Activated CD4-positive, alpha-beta memory T cell treated with anti-CD3 and anti-CD28 coated beads for 36 hours (primary cell): ENCODE measurements at regions of chrX and their contacts with region 1.

Region 1: GRCh38 chrX:148380650-148381561 is 119.5 kb upstream of the AFF2 start:
- DNase-seq: peak; percentile 60
- H3K4me3 Mint-ChIP-seq: peak overlapping the region; percentile 64
- H3K27ac Mint-ChIP-seq: peak overlapping the region; percentile 87
- H3K4me1 Mint-ChIP-seq: peaks cover 34% of the 10 kb centered on the region
- H3K27me3 Mint-ChIP-seq: no peaks in the 10 kb centered on the region

Region 2: DNA sequence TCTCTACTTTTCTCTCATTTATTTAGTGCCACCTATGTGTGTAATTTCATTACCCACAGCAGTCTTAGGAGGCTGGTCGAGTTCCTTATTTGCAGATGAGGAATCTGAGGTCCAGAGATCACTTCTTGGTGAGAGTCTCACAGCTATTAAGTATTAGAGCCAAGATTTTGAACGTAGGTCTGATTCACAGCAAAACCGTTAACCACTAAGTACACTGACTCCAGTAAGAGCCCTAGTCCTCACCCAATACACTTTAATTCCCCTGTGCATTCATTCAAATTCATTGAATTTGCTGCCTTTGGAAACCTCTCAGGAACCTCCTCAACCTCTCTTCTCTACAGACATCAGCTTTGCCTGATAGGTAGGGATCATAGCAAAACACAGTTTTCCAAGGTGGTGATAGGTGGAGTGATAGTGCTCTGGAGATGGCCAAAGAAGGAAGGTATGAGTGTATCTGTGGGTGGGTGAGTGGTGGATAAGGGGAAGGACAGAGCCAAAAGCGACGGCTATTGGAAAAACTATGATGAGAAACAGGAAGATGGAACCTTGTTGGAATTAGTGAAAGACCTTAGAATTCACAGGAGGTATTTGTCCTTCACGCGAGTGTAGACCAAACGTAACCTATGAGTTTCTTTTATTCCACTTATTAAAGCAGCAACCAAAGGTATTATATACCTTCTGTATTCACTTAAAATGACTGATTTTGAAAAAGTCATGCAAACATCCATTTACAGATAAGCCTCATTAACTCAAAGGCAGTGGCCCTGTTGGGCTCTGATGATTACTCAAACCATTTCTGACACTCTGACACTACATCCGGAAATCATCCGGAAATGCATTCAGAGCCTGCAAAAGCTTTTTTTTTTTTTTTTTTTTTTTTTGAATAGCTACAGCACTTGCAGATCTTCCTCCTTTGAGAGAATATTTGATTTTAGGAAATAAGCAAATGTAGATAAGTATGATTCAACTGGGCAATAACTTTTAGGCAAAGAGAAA is 462.9 kb before region 1 on chrX:
- CTCF ChIA-PET with region 1: no interaction called
- POLR2A ChIA-PET with region 1: no interaction called
- intact Hi-C with region 1: loop called (anchors 5 kb)
- DNase-seq: peak; percentile 28
- H3K4me3 Mint-ChIP-seq: peak overlapping the region; percentile 53
- H3K27ac Mint-ChIP-seq: peak overlapping the region; percentile 93
- H3K4me1 Mint-ChIP-seq: peaks cover 58% of the 10 kb centered on the region
- H3K27me3 Mint-ChIP-seq: no peaks in the 10 kb centered on the region

Region 3: DNA sequence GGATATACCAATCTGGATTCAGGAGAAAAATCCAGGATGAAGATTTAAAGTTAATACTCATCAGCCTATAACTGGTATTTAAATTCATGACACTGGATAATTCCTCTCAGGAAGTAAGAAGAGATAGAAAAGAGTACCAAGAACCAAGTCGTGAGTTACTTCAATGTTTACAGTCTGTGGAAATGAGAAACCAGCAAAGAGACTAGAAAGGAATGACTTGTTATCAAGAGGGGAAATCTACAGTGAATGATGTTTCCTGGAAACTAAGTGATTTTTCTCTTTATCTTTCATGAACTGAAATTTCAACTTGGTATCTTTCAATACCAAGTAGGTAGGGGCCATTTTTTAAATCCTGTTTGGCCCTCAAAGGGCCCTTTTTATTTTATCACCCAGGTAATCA is 98.4 kb before region 1 on chrX:
- CTCF ChIA-PET with region 1: no interaction called
- POLR2A ChIA-PET with region 1: no interaction called
- intact Hi-C with region 1: loop called (anchors 1 kb)
- DNase-seq: no peak
- H3K4me3 Mint-ChIP-seq: no peak overlapping the region
- H3K27ac Mint-ChIP-seq: no peak overlapping the region
- H3K4me1 Mint-ChIP-seq: peaks cover 24% of the 10 kb centered on the region
- H3K27me3 Mint-ChIP-seq: no peaks in the 10 kb centered on the region

Region 4: GRCh38 chrX:148310426-148311165 is 70.3 kb before region 1 on chrX:
- CTCF ChIA-PET with region 1: no interaction called
- POLR2A ChIA-PET with region 1: no interaction called
- intact Hi-C with region 1: loop called (anchors 1 kb)
- DNase-seq: peak; percentile 63
- H3K4me3 Mint-ChIP-seq: no peak overlapping the region
- H3K27ac Mint-ChIP-seq: no peak overlapping the region
- H3K4me1 Mint-ChIP-seq: peaks cover 32% of the 10 kb centered on the region
- H3K27me3 Mint-ChIP-seq: no peaks in the 10 kb centered on the region

Region 5: DNA sequence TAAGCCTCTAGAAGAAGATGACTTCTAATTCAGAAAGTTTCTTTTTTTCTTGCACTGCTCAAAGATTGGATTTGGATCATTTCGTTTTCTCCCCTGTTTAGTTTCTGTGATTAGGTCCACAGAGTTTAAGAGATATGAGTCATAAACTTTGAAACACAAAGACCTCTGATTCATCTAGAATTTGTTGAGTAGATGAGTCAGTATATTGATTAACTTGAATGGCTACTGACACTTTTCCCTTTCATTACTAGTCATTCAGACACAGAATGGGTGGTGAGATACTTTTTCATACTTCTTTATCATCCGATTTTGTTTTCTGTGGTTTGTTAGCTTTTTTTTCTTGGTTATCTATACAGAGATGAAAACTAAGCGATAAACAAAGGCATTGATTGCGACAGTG is 85.4 kb after region 1 on chrX:
- CTCF ChIA-PET with region 1: no interaction called
- POLR2A ChIA-PET with region 1: no interaction called
- intact Hi-C with region 1: loop called (anchors 1 kb)
- DNase-seq: no peak
- H3K4me3 Mint-ChIP-seq: no peak overlapping the region
- H3K27ac Mint-ChIP-seq: no peak overlapping the region
- H3K4me1 Mint-ChIP-seq: peaks cover 13% of the 10 kb centered on the region
- H3K27me3 Mint-ChIP-seq: peaks cover 6% of the 10 kb centered on the region

Region 6: DNA sequence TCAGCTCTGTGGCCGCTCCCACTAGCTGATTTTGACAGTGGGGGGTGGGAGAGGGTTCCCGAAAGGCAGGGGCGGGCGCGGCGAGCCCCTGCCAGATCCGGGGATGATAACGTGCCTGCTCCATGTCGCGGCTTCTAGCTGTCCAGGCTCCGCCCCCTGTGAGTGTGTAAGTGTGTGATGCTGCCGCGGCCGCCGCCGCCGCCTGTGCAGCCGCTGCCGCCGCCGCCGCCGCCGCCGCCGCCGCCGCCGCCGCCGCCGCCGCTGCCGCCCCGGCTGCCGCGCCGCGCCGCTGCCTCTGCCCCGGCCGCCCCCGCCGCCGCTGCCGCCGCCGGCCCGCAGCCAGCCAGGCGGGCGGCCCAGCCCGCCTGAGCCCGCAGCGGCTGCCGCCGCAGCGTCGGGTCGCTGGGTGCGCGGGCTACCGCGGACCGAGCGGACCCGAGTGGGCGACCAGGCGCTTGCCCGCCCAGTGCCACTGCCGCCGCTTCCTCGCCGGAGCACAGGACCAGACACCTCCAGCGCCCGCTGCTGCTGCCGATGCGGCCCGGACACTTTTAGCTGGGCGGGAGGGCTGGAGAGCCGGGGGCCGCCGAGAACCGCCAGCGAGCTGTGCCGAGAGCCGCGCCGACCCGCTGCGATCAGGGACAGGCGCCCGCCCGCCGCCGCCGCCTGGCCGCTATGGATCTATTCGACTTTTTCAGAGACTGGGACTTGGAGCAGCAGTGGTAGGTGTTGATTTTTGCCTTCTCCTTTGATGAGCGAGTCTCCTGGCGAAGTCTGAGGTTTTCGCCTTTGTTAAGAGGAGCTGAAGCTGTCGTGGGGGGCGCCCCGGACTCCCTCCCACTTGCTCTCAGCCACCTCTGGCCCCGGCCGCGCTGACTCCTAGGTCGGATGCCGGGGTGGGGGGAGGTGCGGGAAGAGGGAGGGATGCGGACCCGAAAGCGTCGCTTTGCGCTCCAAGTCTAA is 119.8 kb after region 1 on chrX and contains the start of gene AFF2:
- CTCF ChIA-PET with region 1: no interaction called
- POLR2A ChIA-PET with region 1: interaction called, 3 read pairs
- intact Hi-C with region 1: loop called (anchors 1 kb)
- DNase-seq: peak; percentile 50
- H3K4me3 Mint-ChIP-seq: peak within 1 kb of the TSS; percentile 70
- H3K27ac Mint-ChIP-seq: no peak within 1 kb of the TSS
- H3K4me1 Mint-ChIP-seq: peaks cover 6% of the 10 kb centered on the region
- H3K27me3 Mint-ChIP-seq: peaks cover 5% of the 10 kb centered on the region
- total RNA-seq, gene AFF2: 0.36 to 0.45 TPM

Region 7: DNA sequence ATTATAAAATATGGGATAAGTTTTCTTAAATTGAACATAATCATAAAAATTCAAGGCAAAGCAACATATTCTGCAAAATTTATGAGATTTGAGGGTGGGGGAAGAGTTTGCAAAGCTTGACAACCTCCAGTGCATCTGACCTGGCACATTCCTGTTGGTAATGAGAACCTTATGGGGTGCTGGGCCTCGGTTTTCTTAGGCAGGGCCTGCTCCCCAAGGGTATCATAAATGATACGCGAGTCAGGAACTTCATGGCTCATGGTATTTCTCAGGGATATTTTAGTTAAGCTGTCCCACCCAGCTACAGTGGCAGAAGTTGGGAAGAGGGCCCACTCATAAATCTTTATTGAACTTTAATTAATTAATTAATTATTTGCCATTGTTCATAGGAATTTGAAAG is 132.8 kb after region 1 on chrX:
- CTCF ChIA-PET with region 1: no interaction called
- POLR2A ChIA-PET with region 1: no interaction called
- intact Hi-C with region 1: no loop called
- DNase-seq: no peak
- H3K4me3 Mint-ChIP-seq: no peak overlapping the region
- H3K27ac Mint-ChIP-seq: no peak overlapping the region
- H3K4me1 Mint-ChIP-seq: no peaks in the 10 kb centered on the region
- H3K27me3 Mint-ChIP-seq: no peaks in the 10 kb centered on the region

Region 8: DNA sequence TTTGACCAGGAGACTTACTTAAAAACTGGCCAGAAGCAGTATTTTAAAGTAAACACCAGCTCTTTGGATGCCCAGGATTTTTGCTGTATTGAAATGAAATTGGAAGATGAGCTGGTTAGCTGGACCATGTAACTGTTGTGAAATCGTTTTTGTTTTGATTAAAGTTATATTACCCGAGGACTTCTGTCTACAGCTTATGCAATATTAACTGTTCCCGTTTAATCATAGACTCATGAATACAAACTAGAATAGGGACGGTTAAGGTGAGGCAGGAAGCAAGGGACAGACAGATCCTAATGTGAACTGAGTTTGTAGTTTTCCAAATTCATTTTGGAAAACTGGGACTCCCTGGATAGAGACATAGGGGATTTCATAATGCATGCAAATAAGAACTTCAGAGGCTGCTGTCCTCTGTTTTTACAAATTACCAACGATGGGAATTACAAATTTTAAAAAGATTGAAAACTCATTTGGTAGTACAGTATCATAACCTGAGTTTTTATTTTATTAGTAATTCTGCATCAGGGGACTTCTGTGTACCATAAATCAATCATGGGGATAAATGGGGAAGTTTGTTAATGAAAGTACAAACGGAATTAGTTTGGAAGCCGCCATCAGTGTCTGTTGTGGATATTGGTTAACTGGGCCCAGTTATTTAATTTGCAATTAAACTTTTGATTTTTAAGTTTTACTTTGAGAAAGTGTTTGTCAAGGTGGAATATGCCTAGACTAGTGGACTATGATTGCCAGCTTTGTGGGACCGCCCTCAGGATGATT is 423.9 kb after region 1 on chrX:
- CTCF ChIA-PET with region 1: no interaction called
- POLR2A ChIA-PET with region 1: no interaction called
- intact Hi-C with region 1: no loop called
- DNase-seq: no peak
- H3K4me3 Mint-ChIP-seq: no peak overlapping the region
- H3K27ac Mint-ChIP-seq: no peak overlapping the region
- H3K4me1 Mint-ChIP-seq: no peaks in the 10 kb centered on the region
- H3K27me3 Mint-ChIP-seq: no peaks in the 10 kb centered on the region

Region 9: GRCh38 chrX:149286940-149287349 is 906.0 kb after region 1 on chrX:
- CTCF ChIA-PET with region 1: no interaction called
- POLR2A ChIA-PET with region 1: no interaction called
- intact Hi-C with region 1: loop called (anchors 10 kb)
- DNase-seq: peak; percentile 60
- H3K4me3 Mint-ChIP-seq: no peak overlapping the region
- H3K27ac Mint-ChIP-seq: no peak overlapping the region
- H3K4me1 Mint-ChIP-seq: peaks cover 11% of the 10 kb centered on the region
- H3K27me3 Mint-ChIP-seq: peaks cover 4% of the 10 kb centered on the region